ENCODE measurements at regions of chr14 and their contacts with region 1.

Region 1: DNA sequence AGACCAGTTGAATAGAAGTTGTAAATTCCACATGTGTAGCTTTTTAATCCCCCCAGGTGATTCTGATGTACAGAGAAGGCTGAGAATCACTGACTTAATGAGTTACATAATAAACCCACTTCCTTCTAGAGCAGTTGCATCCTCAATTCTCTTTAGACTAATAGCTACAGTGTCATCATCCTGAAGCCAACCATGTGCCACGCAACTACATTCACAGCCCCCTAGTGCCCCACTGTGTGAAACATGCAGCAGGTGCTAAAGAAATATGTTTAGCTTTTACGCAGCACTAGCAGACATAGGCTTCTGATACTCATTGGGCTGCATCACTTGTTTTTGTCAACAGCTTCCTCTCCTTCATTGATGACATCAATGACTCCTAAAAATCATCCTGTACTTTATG is 1168.3 kb downstream of the BCL11B start:
- DNase-seq: peak; percentile 61
- H3K4me3 Mint-ChIP-seq: no peak overlapping the region
- H3K27ac Mint-ChIP-seq: no peak overlapping the region
- H3K4me1 Mint-ChIP-seq: peaks cover 49% of the 10 kb centered on the region
- H3K27me3 Mint-ChIP-seq: no peaks in the 10 kb centered on the region

Region 2: GRCh38 chr14:97874394-97874793 is 229.3 kb before region 1 on chr14:
- CTCF ChIA-PET with region 1: no interaction called
- intact Hi-C with region 1: loop called (anchors 5 kb)
- DNase-seq: peak; percentile 51
- H3K4me3 Mint-ChIP-seq: peak overlapping the region; percentile 34
- H3K27ac Mint-ChIP-seq: no peak overlapping the region
- H3K4me1 Mint-ChIP-seq: peaks cover 32% of the 10 kb centered on the region
- H3K27me3 Mint-ChIP-seq: no peaks in the 10 kb centered on the region

Region 3: GRCh38 chr14:98008381-98009113 is 95.2 kb before region 1 on chr14:
- CTCF ChIA-PET with region 1: no interaction called
- intact Hi-C with region 1: loop called (anchors 1 kb)
- DNase-seq: peak; percentile 65
- H3K4me3 Mint-ChIP-seq: no peak overlapping the region
- H3K27ac Mint-ChIP-seq: peak overlapping the region; percentile 96
- H3K4me1 Mint-ChIP-seq: peaks cover 62% of the 10 kb centered on the region
- H3K27me3 Mint-ChIP-seq: no peaks in the 10 kb centered on the region

Region 4: DNA sequence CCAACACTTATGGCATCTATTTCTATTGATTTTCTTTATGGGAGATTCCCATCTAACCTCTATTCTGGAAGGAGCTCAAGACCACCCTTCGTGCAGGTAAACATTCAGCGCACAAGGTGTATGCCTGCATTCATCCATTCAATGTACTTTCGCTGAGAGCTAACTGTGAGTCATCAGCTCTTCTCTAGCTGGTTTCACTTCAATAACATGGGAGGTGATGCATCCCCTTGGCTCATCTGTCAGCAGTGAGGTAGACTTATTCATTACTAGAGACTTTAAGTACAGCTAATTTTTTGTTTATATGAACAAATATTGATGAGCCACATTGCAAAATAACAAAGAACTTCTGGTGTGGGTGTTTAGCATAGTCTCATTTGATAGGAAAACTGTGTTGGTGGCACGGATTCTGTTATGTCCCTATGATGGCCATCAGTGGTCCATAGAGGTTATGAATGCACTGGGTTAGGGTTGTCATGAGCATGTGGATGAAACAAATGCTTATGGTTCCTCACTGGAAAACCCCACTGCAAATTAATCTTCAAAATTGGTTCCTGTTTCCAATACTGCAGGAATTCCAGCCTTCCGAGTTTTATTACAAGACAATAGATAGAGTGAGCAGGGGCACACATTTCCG is 17.2 kb after region 1 on chr14:
- CTCF ChIA-PET with region 1: interaction called, 3 read pairs
- intact Hi-C with region 1: loop called (anchors 2 kb)
- DNase-seq: peak; percentile 70
- H3K4me3 Mint-ChIP-seq: no peak overlapping the region
- H3K27ac Mint-ChIP-seq: peak overlapping the region; percentile 31
- H3K4me1 Mint-ChIP-seq: peaks cover 21% of the 10 kb centered on the region
- H3K27me3 Mint-ChIP-seq: no peaks in the 10 kb centered on the region

Region 5: DNA sequence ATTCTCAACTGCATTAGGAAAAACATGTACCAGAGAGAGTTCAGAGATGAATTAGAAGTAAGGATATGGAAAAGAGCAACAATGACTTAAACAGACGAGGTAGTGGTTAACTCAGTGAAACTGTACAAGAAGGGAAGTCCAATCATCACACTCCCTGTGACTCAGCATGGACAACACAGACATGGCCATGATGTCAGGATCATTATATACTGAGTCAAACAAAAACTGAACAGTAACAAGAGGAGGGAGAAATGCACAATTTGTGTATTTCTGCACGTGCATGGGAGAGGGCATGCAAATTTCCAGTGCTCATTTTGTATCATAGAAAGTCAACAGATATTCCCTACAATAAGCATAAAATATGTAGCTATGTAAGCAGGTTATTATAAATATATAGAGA is 130.5 kb after region 1 on chr14:
- CTCF ChIA-PET with region 1: no interaction called
- intact Hi-C with region 1: loop called (anchors 1 kb)
- DNase-seq: peak; percentile 82
- H3K4me3 Mint-ChIP-seq: no peak overlapping the region
- H3K27ac Mint-ChIP-seq: peak overlapping the region; percentile 71
- H3K4me1 Mint-ChIP-seq: peaks cover 74% of the 10 kb centered on the region
- H3K27me3 Mint-ChIP-seq: no peaks in the 10 kb centered on the region

Region 6: DNA sequence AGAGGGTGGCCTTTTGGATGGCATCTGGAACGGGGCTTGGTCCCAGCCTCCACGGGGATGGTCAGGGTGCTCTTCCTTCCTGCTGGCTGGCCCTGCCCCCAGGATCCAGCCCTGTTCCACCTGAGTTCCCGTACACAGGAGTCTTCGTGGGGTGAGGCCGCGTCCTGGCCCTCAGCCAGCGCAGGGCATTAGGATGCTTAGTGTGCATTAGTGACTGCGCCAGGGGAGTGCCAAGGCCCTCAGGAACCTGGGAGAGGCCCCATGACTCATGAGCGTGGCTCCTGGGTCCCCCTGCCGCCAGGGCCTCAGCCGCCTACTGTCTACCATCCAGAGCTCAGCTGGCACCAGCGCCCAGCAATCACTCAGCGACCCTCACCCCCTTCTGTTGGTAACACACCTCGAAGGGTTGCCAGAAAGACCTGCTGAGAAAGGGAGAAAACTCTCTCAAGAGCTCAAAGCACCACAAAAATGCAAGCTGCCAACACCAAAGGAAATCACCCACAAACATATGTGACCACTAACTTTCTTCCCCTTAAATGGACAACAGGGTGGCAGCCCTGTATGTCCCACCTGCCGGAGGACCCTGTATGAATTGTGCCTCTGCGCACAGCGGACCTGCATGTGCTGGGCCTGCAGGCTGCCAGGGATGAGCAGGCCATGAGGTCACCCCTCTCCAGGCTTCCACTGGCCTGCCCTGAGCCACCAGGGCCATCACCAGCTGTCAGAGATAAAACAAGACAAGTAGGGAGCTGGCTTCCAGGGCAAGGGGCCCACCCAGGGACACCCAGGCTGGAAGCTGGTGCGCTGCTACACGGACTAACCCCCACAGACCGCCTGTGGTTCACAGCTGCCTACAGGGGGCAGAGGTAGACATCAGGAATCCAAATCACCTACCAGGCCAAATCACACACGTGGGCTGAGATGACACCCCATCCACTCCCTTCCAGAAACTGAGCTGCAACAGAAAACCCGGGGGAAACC is 1471.6 kb after region 1 on chr14:
- CTCF ChIA-PET with region 1: no interaction called
- intact Hi-C with region 1: no loop called
- DNase-seq: no peak
- H3K4me3 Mint-ChIP-seq: no peak overlapping the region
- H3K27ac Mint-ChIP-seq: no peak overlapping the region
- H3K4me1 Mint-ChIP-seq: no peaks in the 10 kb centered on the region
- H3K27me3 Mint-ChIP-seq: no peaks in the 10 kb centered on the region